ENCODE measurements at regions of chr10 and their contacts with region 1.

Region 1: DNA sequence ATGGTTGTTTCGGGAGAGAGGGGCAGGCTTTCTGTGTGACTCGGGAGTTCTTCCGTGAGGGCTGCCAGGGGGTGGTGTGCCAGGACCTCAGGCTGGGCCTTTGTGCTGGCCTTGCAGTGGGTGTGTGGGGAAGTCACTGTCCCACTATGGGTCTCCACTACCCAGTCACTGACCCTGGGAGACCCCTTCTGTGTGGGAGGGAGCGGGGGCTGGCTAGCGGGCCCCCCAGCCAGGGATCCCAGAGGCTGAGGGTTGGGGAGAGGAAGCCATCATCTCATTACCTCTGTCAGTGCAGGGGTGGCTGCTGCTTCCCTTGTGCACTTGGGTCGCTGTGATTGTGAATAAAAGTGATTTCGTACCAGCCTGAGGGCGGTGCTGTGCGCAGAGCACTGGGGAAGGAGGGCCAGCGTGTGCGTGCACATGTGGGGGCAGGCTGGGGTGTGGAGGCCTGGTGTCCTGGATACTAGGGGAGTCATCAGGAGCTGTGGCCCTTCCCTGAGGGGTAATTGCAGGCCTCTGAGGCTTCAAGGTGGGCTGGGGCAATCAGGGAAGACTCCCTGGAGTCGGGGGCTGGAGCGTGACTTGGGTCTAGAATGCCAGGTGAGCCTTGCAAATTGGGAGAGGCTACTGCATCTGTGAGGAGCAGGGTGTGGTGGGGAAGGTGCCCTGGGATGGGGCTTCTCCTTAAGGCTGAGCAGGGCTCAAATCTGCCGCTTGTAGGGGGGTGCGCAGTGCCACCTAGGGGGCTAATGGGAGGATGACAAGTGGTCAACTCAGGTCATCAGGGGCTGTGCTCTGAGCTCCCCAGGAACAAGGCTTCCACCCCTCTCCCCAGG is 98.9 kb downstream of the NEURL1 start:
- DNase-seq: peak; percentile 56 to 94
- ATAC-seq: peak; percentile 80 to 94
- H3K4me3 ChIP-seq: no peak overlapping the region
- H3K27ac ChIP-seq: no peak overlapping the region
- H3K4me1 ChIP-seq: no peaks in the 10 kb centered on the region
- CTCF ChIP-seq: peak; percentile 77
- EP300 ChIP-seq: no peak
- POLR2A ChIP-seq: no peak
- RAD21 ChIP-seq: peak; percentile 76 to 86

Region 2: GRCh38 chr10:103491493-103492381 is 100.7 kb before region 1 on chr10:
- CTCF ChIA-PET with region 1: interaction called, 11 read pairs
- POLR2A ChIA-PET with region 1: no interaction called
- DNase-seq: peak; percentile 68 to 77
- ATAC-seq: peak; percentile 69 to 74
- H3K4me3 ChIP-seq: no peak overlapping the region
- H3K27ac ChIP-seq: no peak overlapping the region
- H3K4me1 ChIP-seq: peaks cover 13% of the 10 kb centered on the region
- CTCF ChIP-seq: no peak
- EP300 ChIP-seq: no peak
- POLR2A ChIP-seq: no peak
- RAD21 ChIP-seq: no peak

Region 3: DNA sequence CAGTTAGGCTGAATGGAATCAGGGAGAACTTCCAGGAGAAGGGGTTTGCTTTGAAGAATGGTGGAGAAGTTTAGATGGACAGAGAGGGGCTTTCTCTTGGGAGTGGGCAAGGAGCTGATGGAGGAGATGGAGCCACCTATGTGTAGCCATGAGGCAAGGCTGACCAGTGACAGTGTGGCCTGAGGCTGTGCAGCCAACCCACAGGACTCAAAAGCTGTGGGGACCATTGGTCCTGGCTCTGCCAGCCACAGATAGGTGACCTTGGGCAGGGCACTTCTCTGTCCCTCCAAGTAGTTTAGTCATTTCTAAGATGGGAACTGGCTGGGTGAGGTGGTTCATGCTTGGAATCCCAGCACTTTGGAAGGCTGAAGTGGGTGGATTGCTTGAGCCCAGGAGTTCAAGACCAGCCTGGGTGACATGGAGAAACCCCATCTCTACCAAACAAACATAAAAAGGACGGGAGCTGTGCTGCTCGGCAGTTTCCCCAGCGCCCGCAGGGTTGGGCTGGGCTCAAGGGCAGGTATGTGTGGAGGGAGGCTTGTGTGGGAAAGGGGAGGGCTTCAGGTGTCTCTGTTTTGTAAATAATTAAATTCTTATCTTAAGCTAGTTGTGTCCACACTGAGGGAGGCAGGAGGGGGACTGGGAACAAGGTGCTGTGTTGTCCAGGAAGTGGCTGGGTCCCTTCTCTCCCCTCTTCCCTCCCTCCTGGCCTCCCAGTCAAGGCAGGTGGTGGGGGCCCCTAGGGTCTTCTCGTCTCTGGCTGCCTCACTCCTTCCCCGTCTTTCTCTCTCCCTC is 80.0 kb before region 1 on chr10:
- CTCF ChIA-PET with region 1: interaction called, 12 read pairs
- POLR2A ChIA-PET with region 1: no interaction called
- DNase-seq: no peak
- ATAC-seq: no peak
- H3K4me3 ChIP-seq: no peak overlapping the region
- H3K27ac ChIP-seq: no peak overlapping the region
- H3K4me1 ChIP-seq: no peaks in the 10 kb centered on the region
- CTCF ChIP-seq: no peak
- EP300 ChIP-seq: no peak
- POLR2A ChIP-seq: no peak
- RAD21 ChIP-seq: no peak

Region 4: GRCh38 chr10:103605359-103606095 is 13.1 kb after region 1 on chr10:
- CTCF ChIA-PET with region 1: interaction called, 17 read pairs
- POLR2A ChIA-PET with region 1: no interaction called
- DNase-seq: peak; percentile 55 to 74
- ATAC-seq: peak; percentile 63 to 82; a peak in 4 of 6 replicates
- H3K4me3 ChIP-seq: no peak overlapping the region
- H3K27ac ChIP-seq: no peak overlapping the region
- H3K4me1 ChIP-seq: no peaks in the 10 kb centered on the region
- CTCF ChIP-seq: peak; percentile 53
- EP300 ChIP-seq: no peak
- POLR2A ChIP-seq: no peak
- RAD21 ChIP-seq: peak; percentile 41 to 62; a peak in 4 of 5 replicates

Region 5: GRCh38 chr10:103911021-103911459 is 318.6 kb after region 1 on chr10:
- CTCF ChIA-PET with region 1: no interaction called
- POLR2A ChIA-PET with region 1: no interaction called
- DNase-seq: no peak
- ATAC-seq: no peak
- H3K4me3 ChIP-seq: no peak overlapping the region
- H3K27ac ChIP-seq: peak overlapping the region; percentile 50 to 77
- H3K4me1 ChIP-seq: peaks cover 46% of the 10 kb centered on the region
- CTCF ChIP-seq: no peak
- EP300 ChIP-seq: no peak
- POLR2A ChIP-seq: no peak
- RAD21 ChIP-seq: no peak

Measured in A549 (cell line).